ENCODE measurements at regions of chr13 and their contacts with region 1.

Region 1: GRCh38 chr13:110347535-110348308 is 40.6 kb downstream of the COL4A2 start:
- DNase-seq: no peak
- H3K4me3 ChIP-seq: no peak overlapping the region
- H3K27ac ChIP-seq: peak overlapping the region; percentile 61
- H3K4me1 ChIP-seq: peaks cover 33% of the 10 kb centered on the region
- H3K27me3 ChIP-seq: peaks cover 0 to 2% of the 10 kb centered on the region in 2 experiments
- CTCF ChIP-seq: no peak
- POLR2A ChIP-seq: no peak

Region 2: DNA sequence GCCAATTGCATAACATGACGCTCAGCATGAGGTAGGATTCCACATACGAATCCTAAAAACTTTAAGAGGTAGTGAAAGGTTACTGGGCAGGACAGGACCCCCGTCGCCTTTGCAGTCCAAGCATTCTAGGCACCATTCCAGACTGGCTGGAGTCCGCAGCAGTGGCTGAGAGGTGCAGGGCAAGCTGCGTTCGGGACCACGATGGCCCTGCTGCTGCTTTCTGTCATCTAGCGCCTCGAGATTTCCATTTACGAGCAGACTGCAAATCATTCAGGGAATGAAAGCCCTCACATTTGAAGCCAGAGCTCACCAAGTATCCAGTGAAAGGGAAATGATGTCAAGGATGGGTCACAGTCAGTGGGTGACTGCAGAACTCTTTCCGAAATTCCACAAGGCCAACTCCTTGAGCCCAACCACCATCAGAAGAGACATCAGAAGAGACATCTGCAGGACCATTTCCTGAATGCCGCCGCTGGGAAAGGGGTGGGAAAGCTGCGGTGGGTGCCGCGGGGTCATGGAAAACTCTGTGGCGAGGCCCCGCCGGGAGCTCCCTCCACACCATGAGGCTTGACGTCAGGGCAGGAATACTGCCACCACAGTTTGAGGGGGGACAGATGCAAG is 129.0 kb before region 1 on chr13:
- CTCF ChIA-PET with region 1: interaction called, 10 read pairs
- POLR2A ChIA-PET with region 1: no interaction called
- dilution Hi-C with region 1: no loop called
- intact Hi-C with region 1: no loop called
- DNase-seq: no peak
- H3K4me3 ChIP-seq: no peak overlapping the region
- H3K27ac ChIP-seq: no peak overlapping the region
- H3K4me1 ChIP-seq: peaks cover 18% of the 10 kb centered on the region
- H3K27me3 ChIP-seq: no peaks in the 10 kb centered on the region
- CTCF ChIP-seq: no peak
- POLR2A ChIP-seq: no peak

Region 3: GRCh38 chr13:110250258-110250891 is 97.3 kb before region 1 on chr13:
- CTCF ChIA-PET with region 1: interaction called, 12 read pairs
- POLR2A ChIA-PET with region 1: no interaction called
- dilution Hi-C with region 1: no loop called
- intact Hi-C with region 1: no loop called
- DNase-seq: peak; percentile 64
- H3K4me3 ChIP-seq: no peak overlapping the region
- H3K27ac ChIP-seq: peak overlapping the region; percentile 77
- H3K4me1 ChIP-seq: peaks cover 38% of the 10 kb centered on the region
- H3K27me3 ChIP-seq: no peaks in the 10 kb centered on the region
- CTCF ChIP-seq: no peak
- POLR2A ChIP-seq: no peak

Region 4: GRCh38 chr13:110263888-110264287 is 83.8 kb before region 1 on chr13:
- CTCF ChIA-PET with region 1: interaction called, 7 read pairs
- POLR2A ChIA-PET with region 1: no interaction called
- dilution Hi-C with region 1: no loop called
- intact Hi-C with region 1: loop called (anchors 1 kb)
- DNase-seq: no peak
- H3K4me3 ChIP-seq: no peak overlapping the region
- H3K27ac ChIP-seq: peak overlapping the region; percentile 25
- H3K4me1 ChIP-seq: peaks cover 85% of the 10 kb centered on the region
- H3K27me3 ChIP-seq: no peaks in the 10 kb centered on the region
- CTCF ChIP-seq: no peak
- POLR2A ChIP-seq: no peak

Region 5: DNA sequence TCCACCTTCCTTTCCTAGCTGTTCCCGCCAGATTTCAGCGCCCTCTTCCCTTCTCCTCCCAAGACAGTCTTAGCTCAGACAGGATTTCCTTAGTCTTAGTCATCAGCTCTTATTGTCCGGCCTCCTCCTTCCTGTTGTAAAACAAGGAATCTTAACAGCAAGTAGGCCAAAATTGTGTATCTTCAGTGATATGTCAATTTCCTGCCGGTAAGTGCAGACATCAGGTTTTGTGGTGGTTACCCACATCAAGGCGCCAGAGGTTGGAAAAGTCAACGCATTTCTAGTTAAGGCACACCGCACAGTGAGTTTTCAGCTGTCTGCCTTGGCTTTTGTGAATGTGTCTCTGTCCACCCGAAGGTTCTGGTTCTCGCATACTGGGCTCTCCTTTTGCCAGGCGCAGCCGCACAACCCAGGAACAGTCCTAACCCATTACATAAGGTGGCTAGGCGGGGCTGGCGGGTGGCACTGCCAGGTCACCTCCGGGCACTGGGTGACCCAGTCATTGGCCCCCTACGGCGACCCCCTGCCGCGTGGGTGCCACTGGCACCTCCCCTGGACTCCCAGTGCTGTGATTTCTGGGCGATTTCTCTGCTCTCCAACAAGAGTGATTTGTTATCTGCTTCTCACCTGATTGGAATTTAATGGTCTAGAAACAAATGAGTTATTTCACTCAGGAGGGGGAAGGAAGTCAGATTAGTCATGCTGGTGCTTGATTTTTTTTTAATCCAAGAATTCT is 27.8 kb before region 1 on chr13:
- CTCF ChIA-PET with region 1: interaction called, 4 read pairs
- POLR2A ChIA-PET with region 1: interaction called, 8 read pairs
- dilution Hi-C with region 1: no loop called
- intact Hi-C with region 1: loop called (anchors 1 kb)
- DNase-seq: peak; percentile 87
- H3K4me3 ChIP-seq: peak overlapping the region in 1 of 3 experiments; percentile 30
- H3K27ac ChIP-seq: peak overlapping the region; percentile 97
- H3K4me1 ChIP-seq: peaks cover 36% of the 10 kb centered on the region
- H3K27me3 ChIP-seq: no peaks in the 10 kb centered on the region
- CTCF ChIP-seq: no peak
- POLR2A ChIP-seq: no peak

Region 6: DNA sequence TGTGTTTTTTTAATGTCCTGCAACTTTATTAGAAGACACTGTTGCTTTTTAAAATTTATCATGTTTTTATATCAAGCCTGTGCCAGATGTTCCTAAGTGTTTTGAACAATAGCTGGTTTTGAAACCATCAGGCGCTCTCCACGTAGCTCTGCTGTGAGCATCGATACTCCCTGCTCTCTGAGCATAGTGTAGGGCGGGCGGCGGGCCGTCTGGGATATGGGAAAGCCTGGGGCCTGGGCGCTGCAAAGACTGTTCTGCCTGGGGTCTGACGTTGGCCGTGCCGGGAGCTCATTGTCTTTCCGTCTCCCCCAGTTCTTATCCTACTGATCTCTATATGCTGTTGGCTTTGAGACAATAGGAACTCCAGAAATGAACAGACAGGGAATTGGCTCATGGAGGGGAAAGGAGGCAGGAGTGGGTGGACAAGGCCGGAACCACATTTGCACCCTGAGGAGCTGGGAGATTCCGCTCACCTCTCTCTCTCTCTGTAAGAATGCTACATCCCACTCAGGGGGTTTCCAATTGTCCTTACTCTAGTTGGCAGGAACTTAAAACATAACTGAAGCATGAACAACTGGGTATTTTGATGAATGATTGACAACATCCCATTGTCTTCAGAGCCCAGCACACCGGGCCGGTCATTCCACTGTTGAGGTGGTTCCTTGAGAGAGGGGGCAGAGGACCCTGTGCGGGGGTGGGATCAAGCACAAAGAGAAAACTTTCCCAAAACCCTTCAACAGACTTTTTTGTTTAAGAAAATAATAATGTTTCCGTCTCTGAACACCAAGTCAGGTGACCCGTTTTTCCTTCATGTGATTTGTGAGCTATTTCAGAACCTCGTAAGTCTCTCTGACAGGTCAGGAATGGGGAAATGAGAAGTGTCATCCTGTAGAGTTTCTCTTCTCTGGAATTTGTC is 24.1 kb after region 1 on chr13:
- CTCF ChIA-PET with region 1: interaction called, 10 read pairs
- POLR2A ChIA-PET with region 1: no interaction called
- dilution Hi-C with region 1: no loop called
- intact Hi-C with region 1: no loop called
- DNase-seq: peak; percentile 81
- H3K4me3 ChIP-seq: no peak overlapping the region
- H3K27ac ChIP-seq: peak overlapping the region; percentile 72
- H3K4me1 ChIP-seq: peaks cover 45% of the 10 kb centered on the region
- H3K27me3 ChIP-seq: no peaks in the 10 kb centered on the region
- CTCF ChIP-seq: no peak
- POLR2A ChIP-seq: no peak

Region 7: GRCh38 chr13:110382229-110382628 is 34.5 kb after region 1 on chr13:
- CTCF ChIA-PET with region 1: no interaction called
- POLR2A ChIA-PET with region 1: no interaction called
- dilution Hi-C with region 1: no loop called
- intact Hi-C with region 1: loop called (anchors 2 kb)
- DNase-seq: peak; percentile 90
- H3K4me3 ChIP-seq: no peak overlapping the region
- H3K27ac ChIP-seq: peak overlapping the region; percentile 89
- H3K4me1 ChIP-seq: peaks cover 37% of the 10 kb centered on the region
- H3K27me3 ChIP-seq: no peaks in the 10 kb centered on the region
- CTCF ChIP-seq: no peak
- POLR2A ChIP-seq: no peak

Measured in endothelial cell of umbilical vein (primary cell).